Tibial artery (tissue), 4 donors: ENCODE measurements at regions of chr18 and their contacts with region 1.

Region 1: DNA sequence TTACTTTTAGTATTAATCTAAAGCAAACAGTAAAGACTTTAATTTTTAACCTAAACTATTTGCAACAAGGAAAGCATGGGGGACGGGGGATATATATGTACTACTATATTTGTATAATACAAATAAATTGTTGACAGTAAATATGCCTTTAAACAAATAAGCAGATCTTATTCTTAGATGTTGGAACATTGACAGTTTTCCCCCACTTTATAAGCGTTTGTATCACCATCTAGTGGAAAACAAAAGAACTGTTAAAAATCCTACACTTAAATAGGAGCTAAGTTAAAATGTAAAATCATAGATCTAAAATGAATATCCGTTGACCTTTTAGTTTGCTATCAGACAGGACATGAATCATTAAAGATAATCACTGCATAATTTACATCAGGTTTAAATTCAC is 50.0 kb downstream of the RBBP8 start:
- DNase-seq: no peak
- H3K4me3 ChIP-seq: no peak overlapping the region
- H3K27ac ChIP-seq: no peak overlapping the region
- H3K4me1 ChIP-seq: no peaks in the 10 kb centered on the region
- H3K27me3 ChIP-seq: no peaks in the 10 kb centered on the region
- CTCF ChIP-seq: peak; percentile 50 to 54

Region 2: DNA sequence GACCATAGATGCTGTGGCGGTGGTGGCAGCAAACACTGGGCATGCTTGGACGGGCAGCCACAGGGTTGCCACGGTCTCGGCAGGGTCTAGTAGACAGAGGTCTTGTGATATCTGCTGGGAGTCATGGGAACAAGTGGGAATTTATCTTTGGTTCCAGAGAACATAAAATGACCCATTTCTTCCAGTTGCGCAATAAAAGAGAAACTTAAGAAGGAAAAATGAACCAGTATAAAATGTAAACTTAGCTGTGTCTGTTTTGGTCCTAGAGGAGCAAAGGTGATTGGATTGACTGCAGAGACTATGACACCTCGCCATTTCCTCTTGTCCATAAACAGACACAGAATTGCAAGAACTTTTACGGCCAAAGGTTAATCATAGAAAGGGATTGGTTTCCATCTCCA is 182.6 kb before region 1 on chr18:
- intact Hi-C with region 1: loop called (anchors 5 kb)
- DNase-seq: peak; percentile 58 to 73
- H3K4me3 ChIP-seq: peak overlapping the region; percentile 3 to 24
- H3K27ac ChIP-seq: peak overlapping the region; percentile 73 to 79
- H3K4me1 ChIP-seq: peaks cover 0 to 34% (median 18%) of the 10 kb centered on the region in 4 donors
- H3K27me3 ChIP-seq: no peaks in the 10 kb centered on the region
- CTCF ChIP-seq: no peak

Region 3: GRCh38 chr18:22921772-22922171 is 61.4 kb before region 1 on chr18:
- intact Hi-C with region 1: loop called (anchors 10 kb)
- DNase-seq: no peak
- H3K4me3 ChIP-seq: no peak overlapping the region
- H3K27ac ChIP-seq: no peak overlapping the region
- H3K4me1 ChIP-seq: no peaks in the 10 kb centered on the region
- H3K27me3 ChIP-seq: no peaks in the 10 kb centered on the region
- CTCF ChIP-seq: no peak